Right ventricle myocardium inferior (tissue), 1 donor: ENCODE measurements at regions of chr5 and their contacts with region 1.

Region 1: DNA sequence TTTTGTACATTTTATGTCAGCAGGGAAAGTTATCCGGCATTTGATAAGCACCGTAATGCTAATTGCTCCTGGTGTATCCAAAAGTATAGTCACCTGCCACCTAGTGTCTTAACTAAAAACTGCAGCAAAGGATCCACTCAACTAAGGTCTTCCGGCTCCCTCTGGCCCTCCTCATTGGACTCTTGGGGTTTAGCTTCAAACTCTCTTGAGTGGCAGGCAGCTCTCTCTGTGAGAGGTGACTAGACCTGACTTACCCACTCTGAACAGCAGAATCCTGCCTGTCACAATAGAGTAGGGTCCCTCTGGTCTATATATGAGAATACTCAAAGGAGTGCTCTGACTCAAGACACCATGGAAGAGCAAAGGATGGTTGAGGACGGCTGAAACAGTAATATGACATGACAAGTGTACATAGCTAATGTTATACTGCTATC is 60.3 kb upstream of the CAST start:
- DNase-seq: no peak
- ATAC-seq: peak; percentile 77

Region 2: DNA sequence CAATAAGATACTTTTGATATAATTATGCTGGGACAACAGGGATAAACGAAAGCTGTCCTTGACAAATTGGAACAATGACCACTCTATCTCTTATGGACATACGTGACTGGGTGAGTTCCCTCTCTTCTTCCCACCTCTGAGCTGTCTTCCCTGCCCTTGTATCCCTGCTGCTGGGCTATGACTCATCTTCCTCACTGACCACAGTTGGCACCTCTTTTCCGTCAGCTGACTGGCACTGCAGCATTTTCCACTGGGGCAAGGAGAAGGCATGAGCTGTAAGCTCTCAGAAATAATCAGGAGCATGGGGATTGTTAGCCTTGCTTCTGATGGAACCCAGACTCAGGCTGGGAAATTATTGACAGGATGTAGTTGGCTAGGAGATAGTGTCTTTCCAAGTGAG is 217.5 kb before region 1 on chr5:
- intact Hi-C with region 1: loop called (anchors 5 kb)
- DNase-seq: peak; percentile 58
- ATAC-seq: peak; percentile 95

Region 3: DNA sequence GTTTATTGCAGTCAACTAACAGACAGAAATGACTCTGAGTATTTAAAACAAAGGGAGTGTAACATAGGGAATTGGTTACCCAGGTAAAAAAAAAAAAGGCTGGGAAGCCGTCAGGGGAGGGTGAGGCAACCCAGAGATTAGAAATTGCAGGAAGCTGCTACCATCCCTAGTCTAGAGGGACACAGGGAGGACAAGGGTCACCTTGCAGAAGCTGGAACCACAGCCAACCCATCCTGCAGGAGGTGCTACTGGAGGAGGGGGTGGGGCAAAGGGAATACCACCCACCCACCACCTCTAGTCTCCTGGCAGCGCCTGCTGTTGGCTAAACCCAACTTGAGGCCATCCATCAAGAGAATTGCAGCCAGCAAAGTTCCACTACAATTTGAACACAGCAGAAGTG is 66.9 kb after region 1 on chr5:
- intact Hi-C with region 1: no loop called
- DNase-seq: no peak
- ATAC-seq: peak; percentile 27